Aorta (tissue), 5 donors: ENCODE measurements at regions of chr15 and their contacts with region 1.

Region 1: GRCh38 chr15:45198337-45199135 is 10.8 kb upstream of the SHF start:
- DNase-seq: peak; percentile 94 to 95
- ATAC-seq: peak; percentile 94
- H3K4me3 ChIP-seq: peak overlapping the region; percentile 38 to 85
- H3K27ac ChIP-seq: peak overlapping the region; percentile 77 to 99
- H3K4me1 ChIP-seq: no peaks in the 10 kb centered on the region
- H3K27me3 ChIP-seq: no peaks in the 10 kb centered on the region

Region 2: GRCh38 chr15:45027220-45027619 is 171.3 kb before region 1 on chr15:
- intact Hi-C with region 1: no loop called
- DNase-seq: no peak
- ATAC-seq: no peak
- H3K4me3 ChIP-seq: no peak overlapping the region
- H3K27ac ChIP-seq: no peak overlapping the region
- H3K4me1 ChIP-seq: no peaks in the 10 kb centered on the region
- H3K27me3 ChIP-seq: no peaks in the 10 kb centered on the region

Region 3: GRCh38 chr15:45166834-45167630 is 31.5 kb before region 1 on chr15:
- intact Hi-C with region 1: loop called in 1 of 2 experiments (anchors 2 kb)
- DNase-seq: peak; percentile 94
- ATAC-seq: peak; percentile 81
- H3K4me3 ChIP-seq: peak overlapping the region; percentile 69 to 83
- H3K27ac ChIP-seq: peak overlapping the region; percentile 88 to 89
- H3K4me1 ChIP-seq: no peaks in the 10 kb centered on the region
- H3K27me3 ChIP-seq: no peaks in the 10 kb centered on the region

Region 4: DNA sequence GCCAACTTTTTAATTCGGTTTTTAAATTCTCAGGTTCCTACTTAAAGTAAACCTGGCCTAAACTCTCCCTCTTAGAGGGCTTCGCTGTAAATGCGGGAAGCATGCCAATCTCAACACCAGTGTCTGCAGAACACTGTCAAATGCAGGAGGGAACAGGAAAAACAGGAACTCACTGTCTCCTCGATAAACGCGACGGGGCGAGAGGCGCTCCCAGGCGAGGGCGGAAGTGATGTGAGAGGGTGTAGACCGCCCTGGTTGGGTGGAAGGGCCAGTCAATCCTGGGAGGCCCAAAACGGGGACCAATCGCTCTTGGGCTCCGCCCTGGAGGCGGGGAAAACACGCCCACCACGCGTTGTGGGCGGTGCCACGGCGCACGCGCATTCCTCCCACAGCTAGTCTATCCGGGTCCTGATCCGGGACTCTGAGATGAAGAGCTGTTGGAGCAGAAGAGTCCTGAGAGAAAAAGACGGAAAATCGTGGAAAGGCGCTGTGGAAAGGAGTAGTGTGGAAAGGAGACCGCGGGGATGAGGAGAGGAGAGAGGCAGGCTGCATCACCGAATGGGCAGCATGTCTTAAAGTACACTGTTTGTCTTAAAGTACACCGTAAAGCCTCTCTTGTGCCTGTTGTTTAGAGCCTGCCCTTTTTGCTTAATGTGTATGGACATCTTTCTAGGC is 80.6 kb after region 1 on chr15:
- intact Hi-C with region 1: loop called (anchors 2 kb)
- DNase-seq: peak; percentile 98 to 99
- ATAC-seq: peak; percentile 100
- H3K4me3 ChIP-seq: peak overlapping the region; percentile 45 to 53
- H3K27ac ChIP-seq: peak overlapping the region in 1 of 2 donors; percentile 14
- H3K4me1 ChIP-seq: peaks cover 0 to 5% of the 10 kb centered on the region in 2 donors
- H3K27me3 ChIP-seq: no peaks in the 10 kb centered on the region

Region 5: DNA sequence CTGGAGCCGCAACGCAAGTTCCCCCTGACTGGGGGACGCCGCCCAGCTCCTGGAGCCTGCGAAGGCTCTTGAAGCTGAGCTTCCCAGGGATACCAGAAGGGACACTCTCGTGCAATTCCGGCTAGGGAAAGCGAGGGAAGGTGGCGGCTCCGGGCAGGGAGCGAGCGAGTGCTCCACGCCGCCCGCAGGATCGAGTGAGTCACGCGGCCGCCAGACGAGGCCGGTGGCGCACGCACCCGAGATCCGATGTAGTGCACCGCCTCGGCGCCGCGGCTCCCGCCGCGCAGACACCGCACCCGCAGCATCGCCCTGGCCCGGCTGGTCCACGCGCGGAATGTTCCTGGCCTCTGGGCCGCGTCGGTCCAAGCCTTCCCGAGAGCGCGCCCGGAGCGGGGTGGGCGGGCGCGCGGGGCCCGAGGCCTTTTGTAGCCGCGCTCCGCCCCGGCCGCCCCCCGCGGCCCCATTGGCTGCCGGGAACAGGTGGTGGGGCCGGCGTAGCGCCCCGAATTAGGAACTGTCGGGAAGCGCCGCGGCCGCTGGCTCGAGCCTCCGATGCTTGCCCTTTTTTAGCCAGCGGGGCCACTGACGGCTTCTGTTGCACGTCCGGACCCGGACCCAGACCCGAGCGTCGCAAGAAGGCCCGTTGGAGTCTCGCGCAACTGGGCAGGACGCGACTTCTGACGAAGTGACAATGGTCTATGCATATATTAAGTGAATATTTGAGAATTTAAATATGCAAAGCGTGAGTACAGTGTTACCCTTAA is 179.8 kb after region 1 on chr15 and contains the start of gene GATM:
- intact Hi-C with region 1: loop called in 1 of 2 experiments (anchors 5 kb)
- DNase-seq: peak; percentile 88 to 94
- ATAC-seq: peak; percentile 93
- H3K4me3 ChIP-seq: peak within 1 kb of the TSS; percentile 6 to 34
- H3K27ac ChIP-seq: peak within 1 kb of the TSS in 1 of 2 donors; percentile 61
- H3K4me1 ChIP-seq: no peaks in the 10 kb centered on the region
- H3K27me3 ChIP-seq: no peaks in the 10 kb centered on the region
- total RNA-seq, gene GATM: 27.8 to 31.9 TPM

Region 6: GRCh38 chr15:45402162-45402954 is 203.8 kb after region 1 on chr15:
- intact Hi-C with region 1: loop called in 1 of 2 experiments (anchors 5 kb)
- DNase-seq: peak; percentile 98
- ATAC-seq: peak; percentile 98
- H3K4me3 ChIP-seq: peak overlapping the region; percentile 57 to 82
- H3K27ac ChIP-seq: peak overlapping the region; percentile 38 to 78
- H3K4me1 ChIP-seq: no peaks in the 10 kb centered on the region
- H3K27me3 ChIP-seq: no peaks in the 10 kb centered on the region

Region 7: DNA sequence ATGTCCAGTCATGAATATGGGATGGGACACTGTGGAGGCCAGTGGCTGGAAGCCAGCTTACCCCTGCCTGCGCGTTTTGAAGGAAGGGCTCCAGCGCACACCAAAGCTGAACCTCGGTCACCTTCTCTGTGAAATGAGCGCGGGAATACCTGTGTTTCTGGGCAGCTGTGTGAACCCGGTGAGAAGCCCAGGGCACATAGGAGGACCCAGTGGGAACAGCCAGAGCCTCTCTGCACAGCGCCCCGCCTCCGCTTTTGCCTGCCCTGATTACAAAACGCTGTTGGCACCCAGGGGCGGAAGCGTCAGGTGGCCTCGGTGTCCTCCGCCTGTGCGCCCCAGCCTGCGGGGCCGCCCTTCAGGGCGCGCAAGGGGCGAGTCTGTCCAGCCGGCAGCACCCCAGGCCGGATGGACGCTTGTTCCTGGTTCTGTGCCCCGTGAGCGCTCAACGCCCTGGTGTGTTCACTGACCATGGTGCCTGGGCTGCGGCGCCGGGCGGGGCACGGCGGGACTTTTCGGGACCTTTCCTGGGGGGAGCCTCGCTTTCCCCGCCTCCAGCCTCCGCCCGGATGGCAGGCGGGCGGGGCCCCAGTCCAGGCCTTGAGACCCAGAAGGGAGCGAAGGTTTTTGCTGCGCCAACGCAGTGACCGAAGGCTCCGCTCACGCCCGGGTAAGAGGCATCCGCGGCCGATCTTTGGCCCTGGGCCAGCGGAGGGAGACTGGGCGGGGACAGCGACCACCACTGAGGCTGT is 436.1 kb after region 1 on chr15 and contains the start of gene SQOR:
- intact Hi-C with region 1: loop called in 1 of 2 experiments (anchors 10 kb)
- DNase-seq: peak; percentile 94
- ATAC-seq: peak; percentile 92
- H3K4me3 ChIP-seq: peak within 1 kb of the TSS; percentile 61
- H3K27ac ChIP-seq: peak within 1 kb of the TSS; percentile 10 to 83
- H3K4me1 ChIP-seq: peaks cover 3 to 5% of the 10 kb centered on the region in 2 donors
- H3K27me3 ChIP-seq: no peaks in the 10 kb centered on the region
- total RNA-seq, gene SQOR: 44.5 to 49.3 TPM